Naive thymus-derived CD4-positive, alpha-beta T cell (primary cell): ENCODE measurements at regions of chr3 and their contacts with region 1.

Region 1: DNA sequence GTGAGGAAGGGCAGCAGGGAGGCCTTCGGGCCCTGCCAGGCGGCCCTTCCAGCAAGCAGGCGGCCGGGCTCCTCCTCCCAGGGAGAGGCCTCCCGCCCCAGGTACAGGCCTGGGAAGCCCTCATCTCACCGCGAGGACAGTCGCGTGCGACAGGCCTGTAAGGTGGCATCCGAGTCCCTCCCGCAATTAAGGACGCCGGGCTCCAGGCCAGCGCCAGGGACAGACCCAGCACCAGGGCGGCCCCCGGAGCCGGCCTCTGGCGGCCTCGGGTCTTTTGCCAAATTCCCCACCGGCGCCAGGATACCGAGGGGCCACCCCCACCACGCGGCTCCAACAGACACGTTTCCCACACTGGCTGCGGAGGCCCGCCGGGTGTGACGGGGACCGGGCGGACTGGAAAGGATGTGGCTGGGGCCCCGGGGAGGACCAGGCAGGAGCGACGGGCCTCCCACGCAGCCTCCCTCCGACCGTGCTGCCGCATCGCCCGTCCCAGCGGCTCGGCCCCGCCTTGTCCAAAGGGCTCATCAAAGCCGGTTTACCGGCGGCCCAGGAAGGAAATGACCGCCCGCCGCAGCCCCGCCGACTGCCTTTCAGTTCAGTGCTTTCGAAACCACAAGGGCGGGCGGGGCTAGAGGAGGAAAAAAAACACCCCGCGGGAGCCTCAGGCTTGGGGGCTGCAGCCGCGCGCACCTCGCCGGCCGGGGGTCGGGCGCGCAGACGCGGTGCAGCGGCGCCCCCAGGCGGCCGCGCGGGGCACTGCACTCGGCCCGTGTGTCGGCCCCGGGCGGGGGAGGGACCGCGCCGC is 11.3 kb downstream of the XXYLT1 start:
- DNase-seq: peak; percentile 80 to 90 (median 84)
- ATAC-seq: peak; percentile 94
- H3K4me3 ChIP-seq: peak overlapping the region; percentile 36
- H3K4me3 Mint-ChIP-seq: peak overlapping the region; percentile 32 to 84 (median 64)
- H3K27ac ChIP-seq: peak overlapping the region; percentile 73
- H3K27ac Mint-ChIP-seq: peak overlapping the region in 7 of 9 donors; percentile 46 to 88 (median 84)
- H3K4me1 ChIP-seq: peaks cover 17 to 19% of the 10 kb centered on the region in 2 donors
- H3K4me1 Mint-ChIP-seq: peaks cover 13 to 24% (median 19%) of the 10 kb centered on the region in 7 donors
- H3K27me3 ChIP-seq: no peaks in the 10 kb centered on the region
- H3K27me3 Mint-ChIP-seq: no peaks in the 10 kb centered on the region

Region 2: GRCh38 chr3:195001961-195002861 is 257.5 kb before region 1 on chr3:
- CTCF ChIA-PET with region 1: interaction called, 5 read pairs
- POLR2A ChIA-PET with region 1: no interaction called
- intact Hi-C with region 1: loop called in 1 of 2 experiments (anchors 1 kb)
- DNase-seq: peak in 4 of 9 donors; percentile 5 to 12 (median 10)
- ATAC-seq: peak; percentile 65
- H3K4me3 ChIP-seq: no peak overlapping the region
- H3K4me3 Mint-ChIP-seq: no peak overlapping the region
- H3K27ac ChIP-seq: no peak overlapping the region
- H3K27ac Mint-ChIP-seq: no peak overlapping the region
- H3K4me1 ChIP-seq: no peaks in the 10 kb centered on the region
- H3K4me1 Mint-ChIP-seq: peaks cover 0 to 6% (median 0%) of the 10 kb centered on the region in 7 donors
- H3K27me3 ChIP-seq: no peaks in the 10 kb centered on the region
- H3K27me3 Mint-ChIP-seq: peaks cover 0 to 14% (median 0%) of the 10 kb centered on the region in 5 donors

Region 3: GRCh38 chr3:195106418-195106906 is 153.2 kb before region 1 on chr3:
- CTCF ChIA-PET with region 1: interaction called, 3 read pairs
- POLR2A ChIA-PET with region 1: no interaction called
- intact Hi-C with region 1: loop called (anchors 1 to 5 kb)
- DNase-seq: peak; percentile 44 to 82 (median 70)
- ATAC-seq: peak; percentile 89
- H3K4me3 ChIP-seq: no peak overlapping the region
- H3K4me3 Mint-ChIP-seq: peak overlapping the region; percentile 10 to 71 (median 62)
- H3K27ac ChIP-seq: no peak overlapping the region
- H3K27ac Mint-ChIP-seq: peak overlapping the region in 1 of 9 donors; percentile 43
- H3K4me1 ChIP-seq: no peaks in the 10 kb centered on the region
- H3K4me1 Mint-ChIP-seq: peaks cover 5 to 10% (median 6%) of the 10 kb centered on the region in 7 donors
- H3K27me3 ChIP-seq: no peaks in the 10 kb centered on the region
- H3K27me3 Mint-ChIP-seq: no peaks in the 10 kb centered on the region